PC-9 (cell line): ENCODE measurements at regions of chr7 and their contacts with region 1.

Region 1: GRCh38 chr7:963307-964078 is 9.0 kb upstream of the ADAP1 start:
- DNase-seq: no peak
- H3K4me3 ChIP-seq: no peak overlapping the region
- H3K27ac ChIP-seq: no peak overlapping the region
- H3K4me1 ChIP-seq: no peaks in the 10 kb centered on the region
- H3K27me3 ChIP-seq: no peaks in the 10 kb centered on the region
- CTCF ChIP-seq: no peak

Region 2: DNA sequence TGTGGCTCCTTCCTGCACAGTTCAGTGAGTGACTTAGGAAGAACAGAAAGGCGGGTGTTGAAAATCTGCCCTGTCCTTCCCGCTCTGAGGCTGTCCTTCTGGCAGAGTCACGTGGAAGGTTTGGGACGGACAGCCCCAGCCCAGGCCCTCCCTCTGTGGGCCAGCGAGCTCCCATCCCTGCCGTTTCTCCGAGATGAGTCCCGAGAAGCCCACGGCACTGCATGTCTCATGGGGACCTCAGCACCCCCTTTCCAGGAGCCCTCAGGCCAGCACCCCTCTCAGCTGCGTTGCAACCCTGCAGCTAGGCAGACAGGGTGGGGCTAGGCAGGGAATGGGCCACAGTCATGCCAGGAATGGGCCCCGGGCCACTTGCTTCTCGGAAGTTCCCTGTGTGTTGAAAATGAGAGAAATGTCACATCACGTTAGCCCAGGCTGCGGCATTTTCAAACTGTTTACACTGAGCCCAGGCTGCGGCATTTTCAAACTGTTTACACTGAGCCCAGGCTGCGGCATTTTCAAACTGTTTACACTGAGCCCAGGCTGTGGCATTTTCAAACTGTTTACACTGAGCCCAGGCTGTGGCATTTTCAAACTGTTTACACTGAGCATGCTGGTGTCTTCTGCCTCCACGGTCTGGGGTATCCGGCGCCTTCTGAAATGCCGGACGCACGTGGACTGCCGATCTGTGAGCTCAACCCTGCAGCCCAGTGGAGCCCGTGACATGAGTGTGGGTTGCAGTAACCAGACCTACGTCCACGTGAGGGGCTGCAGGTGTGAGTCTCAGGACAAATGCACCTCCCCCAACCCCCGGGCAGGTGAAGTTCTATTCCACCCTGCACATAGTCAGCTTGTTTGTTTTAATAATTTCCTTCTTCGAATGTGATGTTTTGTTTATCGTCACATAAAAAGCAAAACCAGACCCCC is 728.6 kb before region 1 on chr7:
- CTCF ChIA-PET with region 1: no interaction called
- POLR2A ChIA-PET with region 1: no interaction called
- intact Hi-C with region 1: no loop called
- DNase-seq: peak; percentile 90 to 94
- H3K4me3 ChIP-seq: peak overlapping the region; percentile 30; the same call in 1 of the 2 replicates
- H3K27ac ChIP-seq: peak overlapping the region; percentile 64
- H3K4me1 ChIP-seq: peaks cover 45% of the 10 kb centered on the region
- H3K27me3 ChIP-seq: no peaks in the 10 kb centered on the region
- CTCF ChIP-seq: no peak

Region 3: GRCh38 chr7:584122-584465 is 379.4 kb before region 1 on chr7:
- CTCF ChIA-PET with region 1: no interaction called
- POLR2A ChIA-PET with region 1: no interaction called
- intact Hi-C with region 1: no loop called
- DNase-seq: no peak
- H3K4me3 ChIP-seq: no peak overlapping the region
- H3K27ac ChIP-seq: no peak overlapping the region
- H3K4me1 ChIP-seq: no peaks in the 10 kb centered on the region
- H3K27me3 ChIP-seq: no peaks in the 10 kb centered on the region
- CTCF ChIP-seq: no peak

Region 4: DNA sequence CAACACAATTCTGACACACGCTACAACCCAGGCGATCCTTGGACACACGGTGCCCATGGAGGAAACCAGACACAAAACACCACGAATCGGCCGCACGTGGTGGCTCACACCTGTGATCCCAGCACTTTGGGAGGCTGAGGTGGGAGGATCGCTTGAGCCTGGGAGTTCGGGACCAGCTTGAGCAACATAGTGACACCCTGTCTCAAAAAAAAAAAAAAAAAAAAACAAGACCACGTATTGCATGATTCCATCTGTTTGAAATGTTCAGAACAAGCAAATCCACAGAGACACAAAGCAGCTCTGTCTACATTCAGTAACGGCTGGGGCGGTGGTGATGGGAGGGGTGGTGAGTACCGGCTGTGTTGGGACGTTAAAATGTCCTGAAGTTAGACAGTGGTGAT is 34.2 kb before region 1 on chr7:
- CTCF ChIA-PET with region 1: no interaction called
- POLR2A ChIA-PET with region 1: interaction called, 19 read pairs
- intact Hi-C with region 1: no loop called
- DNase-seq: no peak
- H3K4me3 ChIP-seq: no peak overlapping the region
- H3K27ac ChIP-seq: no peak overlapping the region
- H3K4me1 ChIP-seq: no peaks in the 10 kb centered on the region
- H3K27me3 ChIP-seq: no peaks in the 10 kb centered on the region
- CTCF ChIP-seq: no peak

Region 5: GRCh38 chr7:974820-975681 is 11.6 kb after region 1 on chr7 and contains the start of gene COX19:
- CTCF ChIA-PET with region 1: no interaction called
- POLR2A ChIA-PET with region 1: interaction called, 11 read pairs
- intact Hi-C with region 1: no loop called
- DNase-seq: peak; percentile 70 to 93
- H3K4me3 ChIP-seq: peak within 1 kb of the TSS; percentile 84
- H3K27ac ChIP-seq: peak within 1 kb of the TSS; percentile 79
- H3K4me1 ChIP-seq: peaks cover 18% of the 10 kb centered on the region; the same call in 1 of the 2 replicates
- H3K27me3 ChIP-seq: no peaks in the 10 kb centered on the region
- CTCF ChIP-seq: no peak
- total RNA-seq, gene COX19: 28.9 and 29.3 TPM in 2 replicates

Region 6: GRCh38 chr7:2440608-2441245 is 1477.2 kb after region 1 on chr7:
- CTCF ChIA-PET with region 1: interaction called, 14 read pairs
- POLR2A ChIA-PET with region 1: no interaction called
- intact Hi-C with region 1: no loop called
- DNase-seq: peak; percentile 82 to 98
- H3K4me3 ChIP-seq: peak overlapping the region; percentile 32; the same call in 1 of the 2 replicates
- H3K27ac ChIP-seq: peak overlapping the region; percentile 86
- H3K4me1 ChIP-seq: peaks cover 56% of the 10 kb centered on the region
- H3K27me3 ChIP-seq: no peaks in the 10 kb centered on the region
- CTCF ChIP-seq: no peak